Adrenal gland (tissue), 19 donors: ENCODE measurements at regions of chr3 and their contacts with region 1.

Region 1: GRCh38 chr3:19946832-19947548 is at the start of gene RAB5A:
- DNase-seq: peak; percentile 98 to 99 (median 98)
- H3K4me3 ChIP-seq: peak within 1 kb of the TSS; percentile 57 to 94 (median 84)
- H3K27ac ChIP-seq: peak within 1 kb of the TSS; percentile 85 to 99 (median 98)
- H3K4me1 ChIP-seq: peaks cover 16 to 33% of the 10 kb centered on the region in 2 donors
- H3K27me3 ChIP-seq: no peaks in the 10 kb centered on the region
- CTCF ChIP-seq: no peak
- POLR2A ChIP-seq: peak; percentile 76 to 93
- total RNA-seq, gene RAB5A: 36.8 to 68.6 (median 54.1) TPM

Region 2: DNA sequence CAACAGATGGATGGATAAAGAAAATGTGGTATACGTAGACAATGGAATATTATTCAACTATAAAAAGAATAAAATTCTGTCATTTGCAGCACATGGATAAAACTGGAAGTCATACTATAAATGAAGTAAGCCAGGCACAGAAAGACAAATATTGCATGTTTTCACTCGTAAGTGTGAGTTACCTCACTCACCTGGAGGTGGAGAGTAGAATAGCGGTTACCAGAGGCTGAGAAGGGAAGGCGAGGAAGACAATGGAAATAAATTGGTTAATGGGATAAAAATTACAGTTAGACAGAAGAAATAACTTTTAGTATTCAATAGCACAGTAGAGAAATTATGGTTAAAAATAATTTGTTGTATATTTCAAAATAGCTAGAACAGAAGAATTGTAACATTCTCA is 154.6 kb before region 1 on chr3:
- intact Hi-C with region 1: no loop called
- DNase-seq: no peak
- H3K4me3 ChIP-seq: no peak overlapping the region
- H3K27ac ChIP-seq: no peak overlapping the region
- H3K4me1 ChIP-seq: no peaks in the 10 kb centered on the region
- H3K27me3 ChIP-seq: no peaks in the 10 kb centered on the region
- CTCF ChIP-seq: no peak
- POLR2A ChIP-seq: no peak

Region 3: GRCh38 chr3:20185701-20186598 is 239.0 kb after region 1 on chr3 and contains the start of gene SGO1:
- intact Hi-C with region 1: loop called in 1 of 2 experiments (anchors 5 kb)
- DNase-seq: peak; percentile 99 to 100 (median 99)
- H3K4me3 ChIP-seq: peak within 1 kb of the TSS; percentile 7 to 65 (median 48)
- H3K27ac ChIP-seq: peak within 1 kb of the TSS; percentile 37 to 91 (median 89)
- H3K4me1 ChIP-seq: peaks cover 0 to 11% of the 10 kb centered on the region in 2 donors
- H3K27me3 ChIP-seq: no peaks in the 10 kb centered on the region
- CTCF ChIP-seq: no peak
- POLR2A ChIP-seq: peak; percentile 49 to 91
- total RNA-seq, gene SGO1: 0.41 to 4.2 (median 0.61) TPM in 7 of 9 donors, not detected in the others